HepG2 (cell line): ENCODE measurements at regions of chr9 and their contacts with region 1.

Region 1: GRCh38 chr9:114108016-114108833 is 9.1 kb upstream of the KIF12 start:
- DNase-seq: peak; percentile 80
- ATAC-seq: peak; percentile 98
- H3K4me3 ChIP-seq: peak overlapping the region; percentile 40 to 65 (median 40)
- H3K27ac ChIP-seq: no peak overlapping the region
- H3K4me1 ChIP-seq: peaks cover 51% of the 10 kb centered on the region
- H3K27me3 ChIP-seq: no peaks in the 10 kb centered on the region
- CTCF ChIP-seq: peak; percentile 99
- EP300 ChIP-seq: no peak
- POLR2A ChIP-seq: no peak
- RAD21 ChIP-seq: peak; percentile 100

Region 2: DNA sequence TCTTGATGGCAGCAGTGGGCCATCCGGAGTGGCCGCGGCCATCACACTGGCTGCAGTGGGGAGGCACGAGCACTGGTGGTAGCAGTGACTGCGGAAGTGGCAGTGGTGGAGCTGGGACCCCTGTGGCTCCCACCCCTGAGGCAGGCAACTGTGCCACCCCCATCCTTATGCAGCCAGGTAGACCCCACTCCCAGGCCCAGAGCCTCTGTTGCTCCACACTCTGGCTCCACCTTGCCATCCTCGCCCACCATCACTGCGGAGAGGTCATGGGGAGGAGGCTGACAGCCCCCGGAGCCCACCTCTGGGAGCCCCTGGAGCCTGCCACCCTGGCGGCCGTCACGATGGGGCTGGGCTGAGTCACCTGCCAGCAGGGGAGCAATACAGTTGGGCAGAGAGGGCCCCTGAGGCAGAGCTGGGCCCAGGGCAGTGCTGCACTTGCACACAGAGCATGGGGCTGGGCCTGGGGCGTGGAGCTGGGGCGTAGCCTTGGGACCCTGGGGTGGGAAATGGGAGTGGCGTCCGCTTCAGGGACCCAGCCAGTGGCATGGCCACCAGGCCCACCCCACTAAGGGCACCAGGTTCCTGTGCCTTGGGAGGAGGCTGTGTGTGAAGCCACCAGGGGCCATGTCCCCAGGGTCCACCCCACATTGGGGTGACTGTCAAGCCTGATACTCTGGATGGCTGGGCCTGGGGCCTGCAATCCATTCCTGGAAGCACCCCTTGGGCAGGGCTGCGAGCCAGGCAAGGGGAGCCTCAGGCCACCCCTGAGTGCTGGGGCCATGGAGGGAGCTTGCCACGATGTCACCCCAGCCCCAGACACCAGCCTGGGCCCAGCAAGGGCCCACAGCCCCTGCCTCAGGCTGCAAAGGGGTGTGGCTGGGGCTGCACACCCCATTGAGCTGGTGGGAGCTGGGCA is 37.8 kb before region 1 on chr9:
- CTCF ChIA-PET with region 1: no interaction called
- POLR2A ChIA-PET with region 1: no interaction called
- in situ Hi-C with region 1: no loop called
- intact Hi-C with region 1: no loop called
- DNase-seq: no peak
- ATAC-seq: peak; percentile 43
- H3K4me3 ChIP-seq: no peak overlapping the region; a peak in 1 of 6 replicates
- H3K27ac ChIP-seq: peak overlapping the region; percentile 1
- H3K4me1 ChIP-seq: peaks cover 97% of the 10 kb centered on the region
- H3K27me3 ChIP-seq: no peaks in the 10 kb centered on the region
- CTCF ChIP-seq: no peak
- EP300 ChIP-seq: no peak
- POLR2A ChIP-seq: no peak
- RAD21 ChIP-seq: no peak

Region 3: DNA sequence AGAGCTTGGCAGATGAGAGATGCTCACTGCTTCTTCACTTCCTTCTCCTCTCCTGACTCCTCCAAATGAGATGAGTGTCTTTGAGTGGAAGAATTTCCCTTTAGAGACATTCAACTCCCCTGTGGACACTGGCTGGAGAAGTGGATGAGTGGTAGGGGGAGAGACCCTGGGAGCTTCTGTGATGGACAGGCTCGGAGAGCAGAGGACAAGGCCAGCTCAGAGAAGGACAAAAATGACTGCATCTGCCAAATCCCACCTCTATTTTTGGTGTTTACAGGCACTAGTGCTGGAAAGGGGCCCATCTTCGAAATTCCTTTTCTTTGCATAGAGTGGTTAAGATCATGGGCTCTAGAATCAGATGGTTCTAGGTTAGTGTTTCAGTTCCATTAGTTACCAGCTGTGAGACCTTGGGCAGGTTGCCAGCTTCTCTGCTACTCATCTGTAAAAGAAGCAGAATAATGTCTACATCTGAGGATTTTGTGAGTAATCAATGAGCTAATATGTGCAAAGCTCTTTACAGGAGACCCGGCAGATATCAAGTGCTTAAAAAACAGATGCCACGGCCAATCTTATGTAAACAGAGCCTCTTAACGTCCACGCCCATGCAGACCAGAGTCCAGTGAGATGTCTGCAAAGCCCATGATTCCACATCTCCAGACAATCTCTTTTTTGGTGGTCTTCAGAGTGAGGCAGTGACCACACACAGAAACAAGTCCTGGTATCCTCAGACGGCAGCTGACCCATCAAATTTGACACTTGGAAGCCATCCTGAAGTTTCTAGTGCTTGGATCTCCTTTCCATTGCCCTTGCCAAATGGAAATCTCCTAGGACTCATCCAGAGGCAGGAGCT is 33.6 kb after region 1 on chr9:
- CTCF ChIA-PET with region 1: interaction called, 13 read pairs
- POLR2A ChIA-PET with region 1: interaction called, 15 read pairs
- in situ Hi-C with region 1: loop called (anchors 5 kb)
- intact Hi-C with region 1: loop called (anchors 1 kb)
- DNase-seq: peak; percentile 82
- ATAC-seq: peak; percentile 64
- H3K4me3 ChIP-seq: peak overlapping the region in 1 of 3 experiments; percentile 39; a peak in 2 of 6 replicates
- H3K27ac ChIP-seq: peak overlapping the region; percentile 6
- H3K4me1 ChIP-seq: peaks cover 78% of the 10 kb centered on the region
- H3K27me3 ChIP-seq: no peaks in the 10 kb centered on the region; a peak in 1 of 5 replicates
- CTCF ChIP-seq: no peak
- EP300 ChIP-seq: peak in 1 of 2 experiments; percentile 74; a peak in 2 of 4 replicates
- POLR2A ChIP-seq: no peak
- RAD21 ChIP-seq: no peak

Region 4: DNA sequence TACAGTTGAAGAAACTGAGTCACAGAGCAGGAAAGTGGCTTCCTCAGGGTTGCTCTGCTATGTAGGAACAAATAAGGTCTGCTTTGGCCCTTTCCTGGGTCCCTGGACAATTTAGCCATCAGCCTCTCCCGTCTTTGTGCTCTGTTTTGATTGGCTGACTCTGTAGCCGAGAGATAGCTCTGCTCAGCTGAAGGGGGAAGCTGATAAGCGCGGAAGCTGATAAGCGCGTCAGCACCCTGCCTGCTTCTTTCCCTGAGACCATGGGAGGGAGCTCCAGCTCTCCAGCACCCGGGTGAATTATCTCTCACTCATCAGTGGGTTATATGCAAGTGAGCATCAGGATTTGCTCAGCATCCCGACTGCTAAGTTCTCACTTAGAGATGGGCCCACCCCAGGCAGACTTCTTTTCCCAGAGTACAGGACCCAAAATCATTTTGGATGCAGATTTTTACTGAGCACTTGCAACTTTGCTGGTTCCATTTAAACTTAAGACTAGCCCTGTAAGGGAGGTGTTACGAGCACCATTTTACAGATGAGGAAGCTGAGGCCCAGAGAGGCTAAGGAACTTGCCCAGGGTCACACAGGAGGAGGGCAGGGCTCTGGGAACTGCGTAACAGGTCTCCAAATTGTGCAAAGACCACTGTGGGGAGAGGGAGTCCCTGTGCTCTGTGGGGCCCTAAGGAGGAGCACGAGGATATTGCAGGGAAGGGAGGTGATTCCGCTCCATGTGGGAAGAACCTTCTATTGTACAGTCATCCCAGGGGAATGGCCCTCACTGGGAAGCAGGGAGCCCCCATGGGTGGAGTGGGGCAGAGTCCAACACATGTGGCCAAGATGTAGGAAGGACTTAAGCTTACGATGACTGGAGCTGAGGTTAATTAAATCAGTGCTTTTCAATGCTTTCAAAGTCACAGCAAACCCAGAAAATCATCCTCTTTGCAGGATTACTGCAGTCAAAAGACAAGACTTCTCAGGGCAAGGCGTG is 131.0 kb after region 1 on chr9:
- CTCF ChIA-PET with region 1: no interaction called
- POLR2A ChIA-PET with region 1: no interaction called
- in situ Hi-C with region 1: no loop called
- intact Hi-C with region 1: loop called (anchors 5 kb)
- DNase-seq: peak; percentile 20
- ATAC-seq: no peak; the same call in 2 of the 3 replicates
- H3K4me3 ChIP-seq: no peak overlapping the region
- H3K27ac ChIP-seq: no peak overlapping the region
- H3K4me1 ChIP-seq: no peaks in the 10 kb centered on the region
- H3K27me3 ChIP-seq: no peaks in the 10 kb centered on the region
- CTCF ChIP-seq: no peak
- EP300 ChIP-seq: no peak
- POLR2A ChIP-seq: no peak
- RAD21 ChIP-seq: no peak